MCF 10A (cell line): ENCODE measurements at regions of chr15 and their contacts with region 1.

Region 1: GRCh38 chr15:45429974-45430792 is 51.8 kb upstream of the GATM start:
- DNase-seq: peak; percentile 52
- H3K4me3 Mint-ChIP-seq: no peak overlapping the region
- H3K27ac Mint-ChIP-seq: no peak overlapping the region
- H3K4me1 Mint-ChIP-seq: peaks cover 6% of the 10 kb centered on the region
- H3K27me3 Mint-ChIP-seq: no peaks in the 10 kb centered on the region
- CTCF ChIP-seq: peak; percentile 100

Region 2: DNA sequence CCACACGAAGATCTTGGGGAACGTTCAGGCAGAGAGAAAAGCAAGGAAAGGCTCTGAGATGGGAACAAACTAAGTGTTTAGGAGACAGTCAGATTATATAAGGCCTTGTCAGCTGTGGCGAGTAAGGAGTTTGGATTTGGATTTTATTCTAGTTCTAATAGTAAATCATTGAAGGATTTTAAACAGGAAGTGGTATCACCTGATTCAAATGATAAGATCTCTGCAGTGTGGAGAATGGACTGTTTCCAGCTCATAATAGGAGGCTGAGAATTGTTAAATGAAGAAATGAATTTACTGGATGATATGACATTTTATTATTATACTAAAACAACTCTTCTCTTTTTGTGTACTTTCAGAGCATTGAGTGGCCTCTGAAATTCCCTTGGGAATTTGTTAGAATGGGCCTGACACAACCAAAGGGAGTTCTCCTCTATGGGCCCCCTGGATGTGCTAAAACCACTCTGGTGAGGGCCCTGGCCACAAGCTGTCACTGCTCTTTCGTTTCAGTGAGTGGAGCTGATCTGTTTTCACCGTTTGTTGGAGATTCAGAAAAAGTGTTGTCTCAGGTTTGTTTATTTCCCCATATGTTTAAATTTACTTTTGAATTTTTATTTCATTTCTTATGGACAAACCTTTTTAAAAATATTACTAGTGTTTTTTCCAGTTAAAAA is 15.8 kb before region 1 on chr15:
- CTCF ChIA-PET with region 1: interaction called, 23 read pairs
- POLR2A ChIA-PET with region 1: interaction called, 3 read pairs
- intact Hi-C with region 1: no loop called
- DNase-seq: no peak
- H3K4me3 Mint-ChIP-seq: no peak overlapping the region
- H3K27ac Mint-ChIP-seq: no peak overlapping the region
- H3K4me1 Mint-ChIP-seq: peaks cover 14% of the 10 kb centered on the region
- H3K27me3 Mint-ChIP-seq: no peaks in the 10 kb centered on the region
- CTCF ChIP-seq: no peak

Region 3: DNA sequence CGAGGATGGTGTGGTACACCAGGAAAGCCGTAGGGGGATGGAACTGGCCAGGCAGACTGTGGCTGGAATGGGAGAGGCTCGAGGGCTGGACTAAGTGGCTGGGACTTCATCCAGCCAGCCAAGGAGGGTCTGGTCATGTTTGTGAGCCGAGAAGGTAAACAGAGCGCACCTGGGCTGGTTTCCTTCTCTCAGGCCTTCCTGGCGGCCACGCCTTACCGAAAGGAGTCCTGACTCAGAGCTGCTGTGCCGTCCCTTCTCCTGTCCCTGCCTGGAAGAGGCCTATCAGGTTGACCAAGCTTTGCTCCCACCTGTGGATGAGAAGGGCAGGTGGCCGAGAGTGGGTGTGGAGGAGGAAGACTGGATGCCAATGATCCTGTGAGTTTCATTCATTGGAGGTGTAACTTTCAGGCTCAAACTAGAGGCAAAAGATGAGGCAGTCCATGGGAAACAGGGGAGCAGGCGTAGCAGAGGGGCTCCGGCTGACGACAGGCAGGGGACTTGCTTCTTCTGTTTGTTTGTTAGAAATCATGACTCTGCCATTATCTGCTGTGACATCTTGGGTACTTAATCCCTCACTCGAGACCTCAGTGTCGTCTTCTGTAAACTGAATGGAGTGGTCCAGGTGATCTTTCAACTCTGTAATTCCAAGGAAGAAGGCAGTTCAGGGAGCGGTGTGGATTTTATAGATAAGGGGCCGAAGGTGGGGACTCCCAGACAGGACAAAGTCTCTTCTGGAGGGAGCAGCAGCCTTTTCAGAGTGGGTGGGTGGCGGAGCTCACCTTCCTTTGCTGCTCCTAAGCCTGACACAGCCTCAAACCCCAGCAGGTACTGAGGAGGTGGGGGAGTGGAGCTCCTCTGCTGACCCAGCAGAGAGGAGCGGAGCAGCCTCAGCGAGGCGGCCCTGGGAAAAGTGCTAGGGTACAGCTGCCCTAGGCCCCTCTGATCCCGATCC is 20.0 kb after region 1 on chr15:
- CTCF ChIA-PET with region 1: interaction called, 52 read pairs
- POLR2A ChIA-PET with region 1: interaction called, 7 read pairs
- intact Hi-C with region 1: no loop called
- DNase-seq: peak; percentile 76
- H3K4me3 Mint-ChIP-seq: no peak overlapping the region
- H3K27ac Mint-ChIP-seq: no peak overlapping the region
- H3K4me1 Mint-ChIP-seq: peaks cover 37% of the 10 kb centered on the region
- H3K27me3 Mint-ChIP-seq: no peaks in the 10 kb centered on the region
- CTCF ChIP-seq: no peak

Region 4: GRCh38 chr15:45611305-45611704 is 181.1 kb after region 1 on chr15:
- CTCF ChIA-PET with region 1: interaction called, 12 read pairs
- POLR2A ChIA-PET with region 1: no interaction called
- intact Hi-C with region 1: no loop called
- DNase-seq: peak; percentile 37
- H3K4me3 Mint-ChIP-seq: no peak overlapping the region
- H3K27ac Mint-ChIP-seq: no peak overlapping the region
- H3K4me1 Mint-ChIP-seq: peaks cover 6% of the 10 kb centered on the region
- H3K27me3 Mint-ChIP-seq: no peaks in the 10 kb centered on the region
- CTCF ChIP-seq: peak; percentile 43

Region 5: GRCh38 chr15:45653702-45654424 is 223.7 kb after region 1 on chr15:
- CTCF ChIA-PET with region 1: interaction called, 10 read pairs
- POLR2A ChIA-PET with region 1: no interaction called
- intact Hi-C with region 1: no loop called
- DNase-seq: no peak
- H3K4me3 Mint-ChIP-seq: no peak overlapping the region
- H3K27ac Mint-ChIP-seq: peak overlapping the region; percentile 1
- H3K4me1 Mint-ChIP-seq: peaks cover 11% of the 10 kb centered on the region
- H3K27me3 Mint-ChIP-seq: no peaks in the 10 kb centered on the region
- CTCF ChIP-seq: no peak